ENCODE measurements at regions of chr22 and their contacts with region 1.

Region 1: DNA sequence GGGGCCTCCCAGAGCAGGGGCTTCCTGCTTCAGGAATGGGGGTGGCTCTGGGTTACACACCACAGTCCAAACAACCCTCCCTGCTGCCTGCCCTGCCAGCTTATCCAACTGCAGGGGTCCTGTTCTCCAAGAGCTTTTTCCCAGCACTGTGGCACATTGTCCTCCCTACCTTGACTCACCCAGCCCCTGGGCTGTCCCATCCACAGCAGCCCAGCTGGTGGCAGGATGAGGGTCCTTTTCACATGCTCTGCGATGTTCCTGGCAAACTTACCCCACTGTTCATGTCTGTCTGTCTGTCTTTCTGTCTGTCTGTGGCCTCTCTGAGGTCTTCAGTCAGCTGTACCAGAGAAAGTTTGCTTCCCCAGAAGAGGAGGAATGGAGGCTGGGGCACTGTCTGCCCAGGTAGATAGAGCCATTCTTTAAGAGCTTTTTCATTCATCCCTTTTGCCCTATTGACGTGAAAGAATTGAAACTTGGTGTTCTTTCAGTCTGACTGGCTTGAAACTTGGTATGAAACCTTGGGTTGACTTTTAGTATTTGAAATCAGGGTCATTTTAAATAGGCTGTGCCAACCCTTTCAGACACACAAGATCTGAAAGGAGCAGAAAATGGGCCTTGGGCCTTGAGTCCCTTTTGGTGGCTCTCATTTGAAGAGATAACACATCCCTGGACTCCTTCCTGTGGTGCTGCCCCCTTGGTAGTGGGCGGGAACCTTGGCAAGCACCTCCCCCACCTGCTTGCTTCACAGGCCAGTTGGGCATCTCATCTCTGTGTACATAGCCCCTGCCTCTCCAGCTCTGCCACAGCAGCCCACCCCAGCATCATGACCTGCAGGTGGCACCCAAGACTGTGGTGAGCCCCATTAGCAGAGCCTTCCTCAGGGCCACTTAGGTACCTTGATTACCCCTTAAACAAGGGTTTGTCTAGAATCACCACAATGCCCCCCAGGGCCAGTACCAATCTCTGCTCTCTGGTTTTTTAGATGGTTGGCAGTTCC is 74.6 kb upstream of the SUSD2 start:
- DNase-seq: peak; percentile 5
- H3K4me3 Mint-ChIP-seq: peak overlapping the region; percentile 34
- H3K27ac Mint-ChIP-seq: peak overlapping the region; percentile 78
- H3K4me1 Mint-ChIP-seq: peaks cover 42% of the 10 kb centered on the region
- H3K27me3 Mint-ChIP-seq: no peaks in the 10 kb centered on the region

Region 2: GRCh38 chr22:23970816-23971486 is 135.7 kb before region 1 on chr22:
- intact Hi-C with region 1: no loop called
- DNase-seq: no peak
- H3K4me3 Mint-ChIP-seq: peak overlapping the region; percentile 2
- H3K27ac Mint-ChIP-seq: no peak overlapping the region
- H3K4me1 Mint-ChIP-seq: peaks cover 25% of the 10 kb centered on the region
- H3K27me3 Mint-ChIP-seq: no peaks in the 10 kb centered on the region

Region 3: DNA sequence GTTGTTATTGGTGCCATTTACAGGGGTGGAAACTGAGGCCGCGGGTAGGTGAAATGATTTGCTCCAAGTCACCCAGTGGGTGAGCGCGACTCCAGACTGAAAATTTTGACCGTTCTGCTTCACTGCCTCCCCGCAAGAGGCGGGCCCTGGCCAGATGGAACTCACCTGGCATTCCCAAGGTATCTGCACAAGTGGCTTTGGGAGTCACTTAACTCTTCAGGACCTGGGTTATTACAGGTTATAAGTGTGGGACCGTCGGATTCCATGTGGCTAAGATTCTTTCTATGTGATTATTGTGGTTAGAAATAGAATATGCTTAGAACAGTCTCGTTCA is 95.0 kb before region 1 on chr22:
- intact Hi-C with region 1: loop called (anchors 5 kb)
- DNase-seq: no peak
- H3K4me3 Mint-ChIP-seq: peak overlapping the region; percentile 92
- H3K27ac Mint-ChIP-seq: peak overlapping the region; percentile 98
- H3K4me1 Mint-ChIP-seq: peaks cover 35% of the 10 kb centered on the region
- H3K27me3 Mint-ChIP-seq: no peaks in the 10 kb centered on the region

Region 4: GRCh38 chr22:24175160-24175808 is 68.6 kb after region 1 on chr22:
- intact Hi-C with region 1: loop called (anchors 2 kb)
- DNase-seq: peak; percentile 44
- H3K4me3 Mint-ChIP-seq: no peak overlapping the region
- H3K27ac Mint-ChIP-seq: no peak overlapping the region
- H3K4me1 Mint-ChIP-seq: no peaks in the 10 kb centered on the region
- H3K27me3 Mint-ChIP-seq: no peaks in the 10 kb centered on the region

Measured in activated T-helper 1 cell treated with anti-CD3 and anti-CD28 coated beads, Interleukin-12 subunit alpha, Interleukin-12 subunit beta, Interleukin-2, Interleukin-4 antibody, amounts not matched to agents 30 ng/mL and 10 ng/mL and 1 ng/mL, durations not matched to agents 14 hours and 24 hours and 36 hours (primary cell).